GM18951 (cell line): ENCODE measurements at regions of chr2 and their contacts with region 1.

Region 1: GRCh38 chr2:207746131-207746530 is 23.6 kb downstream of the FZD5 start:
- POLR2A ChIP-seq: no peak

Region 2: DNA sequence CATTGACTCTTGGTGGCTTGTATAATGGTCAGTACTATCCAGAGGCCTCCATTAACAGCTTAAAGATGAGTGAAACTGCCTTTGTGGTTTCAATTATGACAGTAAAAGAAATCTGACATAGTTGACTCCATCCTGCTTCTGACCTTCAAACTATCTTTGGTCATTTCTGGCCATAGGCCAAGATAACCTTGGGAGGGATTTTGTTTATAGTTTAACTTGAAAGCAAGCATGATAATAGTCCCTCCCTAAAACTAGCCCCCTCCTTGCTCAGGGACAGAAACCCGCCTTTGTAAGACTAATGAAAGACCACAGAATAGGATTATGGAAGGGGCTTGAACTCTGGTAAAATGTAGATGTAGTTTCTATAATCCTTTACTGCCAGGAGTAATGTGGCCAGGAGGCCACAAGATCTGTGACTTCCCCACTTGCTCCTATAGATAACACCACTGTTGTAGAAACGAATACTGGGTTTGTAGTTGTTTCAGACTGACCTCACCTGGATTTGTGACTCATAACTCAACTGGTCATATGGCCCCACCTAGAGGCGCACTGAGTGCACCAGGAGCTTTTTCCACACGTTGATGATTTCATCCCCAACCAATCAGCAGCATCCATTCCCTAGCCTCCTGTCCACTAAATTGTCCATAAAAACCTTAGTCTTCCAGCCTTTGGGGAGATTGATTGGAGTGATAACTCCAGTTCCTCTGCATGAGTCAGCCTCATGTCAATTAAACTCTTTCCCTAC is 287.8 kb after region 1 on chr2:
- in situ Hi-C with region 1: loop called (anchors 10 kb)
- POLR2A ChIP-seq: no peak

Region 3: DNA sequence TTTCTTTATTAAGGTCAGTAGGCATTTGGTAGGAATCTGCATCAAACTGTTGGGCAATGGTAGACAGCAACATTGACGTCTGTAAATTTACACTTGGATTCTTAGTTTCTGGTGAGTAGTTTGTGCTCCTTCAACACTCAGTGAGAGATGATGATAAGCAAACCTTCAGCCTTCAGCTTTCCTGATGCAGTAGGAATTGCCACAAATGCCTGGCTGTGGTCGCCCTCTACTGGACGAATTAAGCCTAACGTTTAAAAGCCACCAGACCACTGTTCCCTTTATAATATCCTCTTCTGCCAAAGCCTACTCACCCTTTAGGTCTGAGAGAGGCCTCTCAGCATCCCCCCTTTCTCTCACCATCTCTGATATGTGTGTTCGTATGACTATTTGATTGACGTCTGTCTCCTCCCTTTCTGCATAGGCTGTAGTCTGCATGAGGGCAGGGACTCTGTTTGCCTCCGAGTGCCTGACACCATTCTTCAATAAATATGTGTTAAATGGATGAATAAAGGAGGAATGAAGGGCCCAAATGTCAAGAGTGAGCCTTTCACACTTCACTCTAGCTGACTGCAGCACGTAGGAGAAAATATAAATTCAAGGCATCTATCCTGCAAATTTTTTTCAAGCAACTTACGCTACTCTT is 326.2 kb after region 1 on chr2:
- in situ Hi-C with region 1: loop called (anchors 10 kb)
- POLR2A ChIP-seq: no peak

Region 4: GRCh38 chr2:208118918-208119317 is 372.8 kb after region 1 on chr2:
- in situ Hi-C with region 1: no loop called
- POLR2A ChIP-seq: no peak